Dorsolateral prefrontal cortex (tissue), 120 donors: ENCODE measurements at regions of chr2 and their contacts with region 1.

Region 1: DNA sequence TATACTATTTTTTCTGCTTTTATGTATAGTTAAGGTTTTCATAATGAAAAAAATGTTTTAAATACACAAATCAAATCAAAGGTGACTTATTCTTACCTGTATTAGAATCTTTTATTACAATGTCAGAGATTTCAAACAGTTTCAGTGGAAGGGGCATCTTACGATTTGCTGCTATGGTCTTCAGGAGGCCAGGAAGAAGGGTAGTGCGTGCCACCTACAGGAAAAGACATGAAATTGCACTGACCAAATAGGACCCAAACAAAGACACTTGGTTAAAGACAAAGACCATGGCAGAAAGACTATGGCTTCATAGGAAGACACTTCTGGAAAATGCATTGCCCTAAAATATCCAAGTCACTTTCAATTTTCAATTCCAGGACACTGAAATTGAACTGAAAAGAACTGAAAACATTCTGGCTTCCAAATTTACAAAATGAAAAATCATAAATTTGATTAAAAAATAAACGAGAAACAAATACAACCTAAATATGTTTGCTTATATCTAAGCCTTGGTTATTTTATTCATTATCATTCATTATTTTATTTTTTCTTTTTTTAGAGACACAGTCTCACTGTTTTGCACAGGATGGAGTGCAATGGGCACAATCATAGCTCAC is 42.1 kb downstream of the FARSB start:
- DNase-seq: peak in 2 of 10 donors; percentile 9 to 20
- H3K4me3 ChIP-seq: no peak overlapping the region
- H3K27ac ChIP-seq: no peak overlapping the region
- H3K27me3 ChIP-seq: no peaks in the 10 kb centered on the region
- CTCF ChIP-seq: peak; percentile 49 to 91 (median 80)

Region 2: GRCh38 chr2:221969087-221969829 is 644.6 kb before region 1 on chr2:
- intact Hi-C with region 1: no loop called
- DNase-seq: peak in 6 of 10 donors; percentile 5 to 63 (median 50)
- H3K4me3 ChIP-seq: no peak overlapping the region
- H3K27ac ChIP-seq: no peak overlapping the region
- H3K27me3 ChIP-seq: peaks cover 0 to 5% (median 0%) of the 10 kb centered on the region in 45 donors
- CTCF ChIP-seq: peak; percentile 38 to 85 (median 70)

Region 3: DNA sequence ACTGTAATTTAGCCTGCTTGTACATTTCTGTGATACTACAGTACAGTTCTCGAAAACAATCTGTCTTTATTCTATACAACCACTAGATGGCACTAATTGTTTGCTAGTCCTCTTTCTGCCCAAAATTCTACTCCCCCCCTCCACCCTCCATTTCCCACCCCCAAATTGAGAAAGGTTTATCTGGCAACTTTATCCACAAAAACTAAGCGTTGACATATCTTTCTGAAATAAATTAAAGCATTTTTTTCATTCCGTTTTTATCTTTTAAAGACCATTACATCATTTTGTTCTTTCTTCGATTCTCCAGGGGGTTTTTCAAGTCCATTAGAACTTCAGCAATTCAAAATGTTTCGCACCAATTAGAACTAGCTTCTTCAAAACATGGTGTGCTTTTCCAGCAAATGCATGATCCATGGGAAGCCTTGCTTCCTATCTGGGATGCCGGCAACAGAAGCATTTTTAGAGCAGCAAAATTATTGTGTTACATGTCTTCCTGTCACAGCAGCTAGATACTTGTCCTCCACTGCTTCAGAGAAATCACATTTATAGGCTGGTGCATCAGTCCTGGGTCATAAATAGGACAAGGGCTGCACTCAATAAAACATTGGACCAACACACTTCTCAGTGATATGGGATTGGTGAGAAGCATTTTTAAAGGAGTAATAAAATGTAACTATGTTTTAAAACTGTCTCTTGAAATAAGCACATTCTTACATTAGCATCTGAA is 556.3 kb before region 1 on chr2:
- intact Hi-C with region 1: loop called (anchors 5 to 10 kb)
- DNase-seq: no peak
- H3K4me3 ChIP-seq: peak overlapping the region in 19 of 59 donors; percentile 3 to 48 (median 22)
- H3K27ac ChIP-seq: no peak overlapping the region
- H3K27me3 ChIP-seq: peaks cover 0 to 52% (median 18%) of the 10 kb centered on the region in 45 donors
- CTCF ChIP-seq: peak; percentile 49 to 89 (median 71)

Region 4: GRCh38 chr2:222076973-222077691 is 536.7 kb before region 1 on chr2:
- intact Hi-C with region 1: no loop called
- DNase-seq: no peak
- H3K4me3 ChIP-seq: no peak overlapping the region
- H3K27ac ChIP-seq: no peak overlapping the region
- H3K27me3 ChIP-seq: peaks cover 0 to 78% (median 8%) of the 10 kb centered on the region in 45 donors
- CTCF ChIP-seq: no peak

Region 5: DNA sequence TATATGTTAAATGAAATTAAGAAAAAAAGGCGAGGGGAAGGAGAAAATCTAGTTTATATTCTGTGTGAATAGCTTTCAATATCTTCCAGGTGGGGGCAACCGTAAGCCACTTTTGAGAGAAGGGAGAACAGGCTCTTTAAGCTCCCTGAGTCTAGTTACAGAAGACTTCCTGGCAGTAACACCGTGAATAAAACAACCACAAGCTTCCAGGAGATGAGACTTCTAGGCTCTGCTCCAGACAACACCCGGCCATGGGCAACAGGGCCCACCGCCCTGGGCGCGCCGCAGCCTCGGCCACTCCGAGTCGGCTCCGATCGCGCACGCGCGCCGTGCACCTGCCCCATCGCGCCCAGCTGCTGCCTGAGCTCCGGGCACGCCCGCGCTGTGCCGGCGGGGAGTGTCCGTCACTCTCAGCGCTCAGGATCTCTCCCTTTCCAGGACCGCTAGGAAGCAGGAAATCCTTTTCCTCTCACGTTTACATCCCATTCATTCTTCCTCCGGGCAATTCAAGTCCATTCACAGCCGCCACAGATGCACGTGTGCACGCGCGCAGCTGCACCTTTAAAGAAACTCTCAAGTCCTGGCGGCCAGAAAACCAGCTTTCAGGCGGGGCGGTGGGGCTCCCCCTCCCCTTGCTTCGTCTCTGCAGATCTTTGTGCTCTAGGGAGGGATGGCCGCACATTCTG is 295.7 kb before region 1 on chr2:
- intact Hi-C with region 1: loop called in 1 of 2 experiments (anchors 5 kb)
- DNase-seq: peak in 3 of 10 donors; percentile 32 to 60 (median 34)
- H3K4me3 ChIP-seq: peak overlapping the region; percentile 12 to 72 (median 52)
- H3K27ac ChIP-seq: peak overlapping the region in 9 of 59 donors; percentile 8 to 84 (median 40)
- H3K27me3 ChIP-seq: peaks cover 0 to 93% (median 55%) of the 10 kb centered on the region in 45 donors
- CTCF ChIP-seq: peak in 52 of 56 donors; percentile 24 to 66 (median 44)

Region 6: GRCh38 chr2:222561817-222562645 is 51.8 kb before region 1 on chr2:
- intact Hi-C with region 1: loop called in 1 of 2 experiments (anchors 10 kb)
- DNase-seq: peak in 2 of 10 donors; percentile 36 to 53
- H3K4me3 ChIP-seq: no peak overlapping the region
- H3K27ac ChIP-seq: peak overlapping the region in 1 of 59 donors; percentile 11
- H3K27me3 ChIP-seq: peaks cover 0 to 5% (median 0%) of the 10 kb centered on the region in 45 donors
- CTCF ChIP-seq: peak; percentile 29 to 75 (median 54)